GM13976 (cell line): ENCODE measurements at regions of chr5 and their contacts with region 1.

Region 1: DNA sequence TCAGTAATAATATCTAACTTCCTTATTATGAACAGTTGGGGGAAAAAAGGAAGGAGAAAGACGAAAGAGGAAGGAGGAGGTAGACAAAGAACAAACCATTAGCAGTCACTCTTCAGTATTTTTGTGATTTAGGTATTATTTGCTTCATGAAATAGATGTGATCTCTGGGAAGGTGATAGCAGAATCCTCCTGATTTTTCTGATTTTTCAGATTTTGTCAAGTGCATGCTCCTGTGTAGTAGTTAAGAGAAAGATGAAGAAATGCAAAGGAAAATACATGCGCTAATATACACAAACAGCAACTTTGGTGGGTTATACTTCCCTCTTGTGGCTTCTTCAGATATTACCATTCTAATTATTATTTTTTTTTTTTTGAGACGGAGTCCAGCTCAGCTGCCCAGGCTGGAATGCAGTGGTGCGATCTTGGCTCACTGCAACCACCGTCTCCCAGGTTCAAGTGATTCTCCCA is 31.6 kb downstream of the LMNB1 start:
- DNase-seq: peak; percentile 38
- CTCF ChIP-seq: peak; percentile 13

Region 2: GRCh38 chr5:126339215-126339805 is 469.2 kb before region 1 on chr5:
- in situ Hi-C with region 1: loop called (anchors 25 kb)
- DNase-seq: peak; percentile 65
- CTCF ChIP-seq: peak; percentile 73

Region 3: DNA sequence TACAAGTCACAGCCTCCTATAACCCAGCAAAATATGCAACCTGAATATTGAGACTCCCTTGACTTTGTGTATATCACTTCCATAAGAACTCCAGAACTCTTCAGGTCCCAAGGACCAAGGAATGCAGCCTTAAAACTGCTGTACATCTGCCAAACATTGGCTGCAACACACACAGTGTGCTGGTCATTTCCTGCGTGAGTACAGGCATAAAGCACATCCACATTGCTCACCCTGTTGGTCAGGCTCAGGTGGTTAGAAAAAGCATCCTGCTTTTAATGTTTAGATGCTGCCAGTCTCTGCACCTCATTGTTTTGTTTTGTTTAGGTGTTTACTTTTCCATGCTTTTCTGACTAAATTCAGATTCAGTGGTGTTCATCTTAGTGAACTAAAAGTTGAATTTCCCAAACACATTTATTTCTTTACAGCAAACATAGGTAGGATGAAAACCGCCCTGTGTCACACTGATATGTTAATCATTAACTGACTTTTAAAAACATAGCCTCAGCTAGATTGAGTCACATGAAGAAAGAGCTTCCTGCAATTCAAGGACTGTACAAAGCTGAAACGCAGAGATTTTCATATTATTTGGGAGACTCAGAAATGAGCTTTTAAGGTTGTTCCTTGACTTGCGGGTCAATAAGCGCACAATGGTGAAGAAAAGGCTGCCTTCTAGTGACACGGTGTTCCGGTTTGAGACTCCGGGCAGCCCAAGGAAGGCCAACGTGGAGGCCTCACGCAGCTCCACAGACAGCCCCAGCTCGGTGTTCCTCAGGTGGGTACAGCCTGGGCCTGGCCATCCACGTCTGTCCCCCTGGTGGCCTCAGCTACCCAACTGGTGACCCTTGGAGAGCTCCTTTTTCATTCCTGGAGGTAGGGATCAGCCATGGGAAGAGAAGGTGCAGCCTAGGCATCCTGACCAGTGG is 437.5 kb before region 1 on chr5:
- in situ Hi-C with region 1: no loop called
- DNase-seq: no peak
- CTCF ChIP-seq: no peak

Region 4: GRCh38 chr5:127875235-127876021 is 1066.9 kb after region 1 on chr5:
- in situ Hi-C with region 1: no loop called
- DNase-seq: peak; percentile 35
- CTCF ChIP-seq: peak; percentile 53